ENCODE measurements at regions of chr10 and their contacts with region 1.

Region 1: GRCh38 chr10:96395931-96396877 is 37.4 kb upstream of the OPALIN start:
- DNase-seq: peak; percentile 56 to 83 (median 72)
- H3K4me3 ChIP-seq: no peak overlapping the region
- H3K27ac ChIP-seq: no peak overlapping the region
- H3K4me1 ChIP-seq: no peaks in the 10 kb centered on the region
- H3K27me3 ChIP-seq: peaks cover 13% of the 10 kb centered on the region
- CTCF ChIP-seq: peak; percentile 73 to 85 (median 78)
- POLR2A ChIP-seq: no peak

Region 2: GRCh38 chr10:96491299-96491698 is 95.1 kb after region 1 on chr10:
- intact Hi-C with region 1: no loop called
- DNase-seq: peak in 1 of 7 donors; percentile 4
- H3K4me3 ChIP-seq: no peak overlapping the region
- H3K27ac ChIP-seq: no peak overlapping the region
- H3K4me1 ChIP-seq: no peaks in the 10 kb centered on the region
- H3K27me3 ChIP-seq: peaks cover 6% of the 10 kb centered on the region
- CTCF ChIP-seq: peak in 4 of 6 experiments; percentile 7 to 22 (median 18)
- POLR2A ChIP-seq: no peak

Region 3: DNA sequence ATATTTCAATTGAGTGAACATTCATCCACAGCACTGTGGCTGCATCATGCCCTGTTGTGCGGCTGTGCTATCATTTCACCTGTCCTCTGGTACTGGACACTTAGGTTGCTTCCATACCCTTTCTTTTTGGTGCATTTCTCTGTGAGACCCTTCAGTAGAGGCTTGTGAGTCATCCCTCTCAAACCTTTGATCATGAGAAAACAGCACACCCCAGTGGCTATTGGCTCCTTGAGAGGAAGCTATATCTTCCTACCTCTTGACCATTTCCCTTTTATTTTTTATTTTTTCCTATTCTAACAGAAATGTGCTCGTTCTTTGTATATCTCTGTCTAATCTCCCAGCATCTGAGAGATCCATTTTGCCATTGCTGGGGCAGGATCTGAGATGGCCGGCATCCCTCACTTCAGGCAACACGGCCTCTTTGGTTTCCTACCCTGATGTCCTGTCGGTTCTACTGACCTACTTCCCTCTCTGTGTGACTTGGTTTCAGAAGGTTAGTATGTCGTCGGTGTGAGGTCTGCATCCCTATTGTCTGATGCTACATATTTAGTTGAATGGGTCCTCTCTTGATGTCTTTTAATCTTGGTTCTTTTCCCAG is 347.9 kb after region 1 on chr10:
- intact Hi-C with region 1: loop called in 1 of 2 experiments (anchors 10 kb)
- DNase-seq: peak in 2 of 7 donors; percentile 17 to 20
- H3K4me3 ChIP-seq: no peak overlapping the region
- H3K27ac ChIP-seq: no peak overlapping the region
- H3K4me1 ChIP-seq: no peaks in the 10 kb centered on the region
- H3K27me3 ChIP-seq: no peaks in the 10 kb centered on the region
- CTCF ChIP-seq: peak in 5 of 6 experiments; percentile 24 to 39 (median 36)
- POLR2A ChIP-seq: no peak